Caco-2 (cell line): ENCODE measurements at regions of chr7 and their contacts with region 1.

Region 1: DNA sequence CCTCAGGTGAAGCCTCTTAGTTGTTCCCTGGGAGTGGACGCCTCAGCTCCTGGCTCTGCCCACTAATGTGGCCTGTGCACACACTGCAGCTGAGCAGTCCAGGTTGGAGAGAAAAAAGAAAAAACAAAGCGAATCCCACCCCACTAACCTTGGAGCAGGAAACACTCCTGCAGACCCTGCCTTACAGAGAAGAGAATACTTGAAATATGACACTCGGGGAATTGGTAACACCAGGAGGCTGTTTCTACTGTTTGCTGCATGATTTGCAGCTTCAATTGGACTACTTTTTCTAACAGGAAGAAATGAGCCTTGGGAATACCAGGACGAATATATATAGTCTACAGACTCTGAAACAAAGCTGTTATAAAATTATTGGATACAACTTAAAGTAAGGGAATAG is 22.2 kb downstream of the CDHR3 start:
- DNase-seq: no peak
- H3K4me3 ChIP-seq: no peak overlapping the region
- H3K4me3 Mint-ChIP-seq: no peak overlapping the region
- H3K27ac Mint-ChIP-seq: no peak overlapping the region
- H3K4me1 ChIP-seq: no peaks in the 10 kb centered on the region
- H3K4me1 Mint-ChIP-seq: no peaks in the 10 kb centered on the region
- H3K27me3 ChIP-seq: no peaks in the 10 kb centered on the region
- H3K27me3 Mint-ChIP-seq: peaks cover 10% of the 10 kb centered on the region
- CTCF ChIP-seq: no peak

Region 2: GRCh38 chr7:105876091-105876963 is 108.9 kb before region 1 on chr7 and contains the start of gene ATXN7L1:
- CTCF ChIA-PET with region 1: interaction called, 3 read pairs
- POLR2A ChIA-PET with region 1: no interaction called
- intact Hi-C with region 1: loop called (anchors 5 kb)
- DNase-seq: peak; percentile 97
- H3K4me3 ChIP-seq: peak within 1 kb of the TSS; percentile 95
- H3K4me3 Mint-ChIP-seq: peak within 1 kb of the TSS; percentile 97
- H3K27ac Mint-ChIP-seq: peak within 1 kb of the TSS; percentile 99
- H3K4me1 ChIP-seq: peaks cover 9% of the 10 kb centered on the region; the same call in 1 of the 2 replicates
- H3K4me1 Mint-ChIP-seq: peaks cover 15% of the 10 kb centered on the region
- H3K27me3 ChIP-seq: no peaks in the 10 kb centered on the region
- H3K27me3 Mint-ChIP-seq: no peaks in the 10 kb centered on the region
- CTCF ChIP-seq: peak; percentile 9 to 63
- total RNA-seq, gene ATXN7L1: 14.1 and 18.2 TPM in 2 replicates

Region 3: DNA sequence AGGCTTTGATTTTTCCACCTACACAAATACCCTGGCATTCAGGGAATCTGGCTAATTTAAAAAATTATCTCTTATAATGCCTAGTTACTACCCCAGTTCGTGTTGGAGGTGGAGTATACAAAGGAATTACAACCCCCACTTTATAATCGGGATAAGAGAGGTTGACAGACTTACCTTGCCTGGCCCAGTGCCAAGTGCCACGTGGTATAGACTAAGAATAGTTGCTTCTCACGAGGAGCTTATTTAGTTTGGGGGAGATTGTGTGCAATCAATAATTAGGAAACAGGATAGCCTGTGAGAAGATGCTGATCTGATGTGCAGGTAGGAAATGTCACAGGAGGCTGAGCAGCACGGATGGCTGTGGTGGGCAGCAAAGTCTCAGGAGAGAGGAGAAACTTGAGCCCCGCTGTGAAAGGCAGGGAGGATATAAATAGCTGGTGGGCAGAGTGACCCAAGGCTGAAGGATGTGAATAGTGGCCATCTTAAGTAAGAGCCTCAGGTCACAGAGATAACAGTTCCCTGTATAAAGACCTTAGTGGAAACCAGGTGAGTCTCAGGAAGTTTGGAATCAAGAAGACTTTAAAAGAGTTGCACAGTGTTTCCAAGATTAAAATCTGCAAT is 97.5 kb before region 1 on chr7:
- CTCF ChIA-PET with region 1: no interaction called
- POLR2A ChIA-PET with region 1: no interaction called
- intact Hi-C with region 1: no loop called
- DNase-seq: no peak
- H3K4me3 ChIP-seq: no peak overlapping the region
- H3K4me3 Mint-ChIP-seq: no peak overlapping the region
- H3K27ac Mint-ChIP-seq: no peak overlapping the region
- H3K4me1 ChIP-seq: no peaks in the 10 kb centered on the region
- H3K4me1 Mint-ChIP-seq: no peaks in the 10 kb centered on the region
- H3K27me3 ChIP-seq: no peaks in the 10 kb centered on the region
- H3K27me3 Mint-ChIP-seq: no peaks in the 10 kb centered on the region
- CTCF ChIP-seq: no peak

Region 4: GRCh38 chr7:106176414-106177299 is 191.4 kb after region 1 on chr7:
- CTCF ChIA-PET with region 1: no interaction called
- POLR2A ChIA-PET with region 1: no interaction called
- intact Hi-C with region 1: no loop called
- DNase-seq: peak; percentile 81 to 89
- H3K4me3 ChIP-seq: no peak overlapping the region
- H3K4me3 Mint-ChIP-seq: no peak overlapping the region
- H3K27ac Mint-ChIP-seq: no peak overlapping the region
- H3K4me1 ChIP-seq: no peaks in the 10 kb centered on the region
- H3K4me1 Mint-ChIP-seq: no peaks in the 10 kb centered on the region
- H3K27me3 ChIP-seq: no peaks in the 10 kb centered on the region
- H3K27me3 Mint-ChIP-seq: peaks cover 3% of the 10 kb centered on the region
- CTCF ChIP-seq: peak; percentile 96